CD14-positive monocyte (primary cell): ENCODE measurements at regions of chr15 and their contacts with region 1.

Region 1: GRCh38 chr15:57306161-57306943 is 70.0 kb upstream of the CGNL1 start:
- DNase-seq: peak; percentile 63 to 73 (median 69)
- H3K4me3 ChIP-seq: peak overlapping the region; percentile 38 to 83 (median 42)
- H3K4me3 Mint-ChIP-seq: peak overlapping the region; percentile 92 to 98
- H3K27ac ChIP-seq: peak overlapping the region in 1 of 2 donors; percentile 53
- H3K27ac Mint-ChIP-seq: peak overlapping the region in 4 of 7 donors; percentile 37 to 83 (median 77)
- H3K4me1 ChIP-seq: peaks cover 27 to 39% of the 10 kb centered on the region in 2 donors
- H3K4me1 Mint-ChIP-seq: peaks cover 44% of the 10 kb centered on the region
- H3K27me3 ChIP-seq: no peaks in the 10 kb centered on the region
- H3K27me3 Mint-ChIP-seq: peaks cover 0 to 3% (median under 1%) of the 10 kb centered on the region in 3 donors
- CTCF ChIP-seq: peak; percentile 93

Region 2: GRCh38 chr15:56821721-56822425 is 484.5 kb before region 1 on chr15:
- intact Hi-C with region 1: loop called in 1 of 2 experiments (anchors 5 kb)
- DNase-seq: peak; percentile 24 to 50 (median 40)
- H3K4me3 ChIP-seq: no peak overlapping the region
- H3K4me3 Mint-ChIP-seq: no peak overlapping the region
- H3K27ac ChIP-seq: no peak overlapping the region
- H3K27ac Mint-ChIP-seq: no peak overlapping the region
- H3K4me1 ChIP-seq: no peaks in the 10 kb centered on the region
- H3K4me1 Mint-ChIP-seq: peaks cover 8% of the 10 kb centered on the region
- H3K27me3 ChIP-seq: no peaks in the 10 kb centered on the region
- H3K27me3 Mint-ChIP-seq: no peaks in the 10 kb centered on the region
- CTCF ChIP-seq: peak; percentile 66

Region 3: DNA sequence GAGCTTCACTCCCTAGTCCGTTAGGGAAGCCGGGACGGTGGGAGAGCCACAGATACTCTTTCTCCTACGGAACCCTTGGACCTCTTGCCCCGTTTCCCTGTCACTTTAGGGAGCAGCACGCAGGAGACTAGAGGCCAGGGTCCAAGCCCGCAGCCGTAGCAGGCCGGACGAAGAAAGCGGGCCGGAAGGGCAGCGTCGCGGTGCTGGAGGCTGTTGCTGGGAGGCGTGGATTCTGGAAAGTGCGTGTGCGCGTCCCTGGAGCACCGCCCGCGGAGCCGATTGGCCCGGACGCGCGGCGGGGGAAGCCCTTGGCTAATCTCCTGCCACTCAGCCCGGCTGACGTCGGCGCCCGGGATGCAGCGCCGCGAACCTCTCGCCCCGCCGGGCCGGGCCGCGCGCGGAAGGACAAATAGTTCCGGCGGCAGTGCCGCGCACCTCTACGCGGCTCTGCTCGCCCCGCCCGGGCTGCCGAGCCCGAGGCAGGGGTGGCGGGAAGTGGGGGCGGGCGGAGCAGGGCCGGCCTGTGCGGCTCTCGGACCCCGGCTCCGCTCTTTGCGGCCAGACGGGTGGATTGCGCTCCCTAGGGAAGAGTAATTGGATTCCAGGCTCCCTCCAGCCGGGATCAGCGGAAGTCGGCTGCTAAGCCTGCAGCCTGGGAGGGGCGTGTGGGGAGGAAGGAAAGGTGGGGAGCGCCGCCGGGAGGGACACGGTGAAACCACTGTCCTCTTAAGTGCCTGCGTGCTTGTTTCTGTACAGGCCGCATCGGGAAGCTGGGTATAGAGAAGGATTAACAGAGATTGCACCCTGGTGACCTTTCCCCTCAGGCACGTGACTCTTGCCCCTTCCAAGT is 419.2 kb before region 1 on chr15:
- intact Hi-C with region 1: no loop called
- DNase-seq: peak; percentile 90 to 94 (median 91)
- H3K4me3 ChIP-seq: peak overlapping the region; percentile 66 to 80 (median 78)
- H3K4me3 Mint-ChIP-seq: peak overlapping the region; percentile 85 to 89
- H3K27ac ChIP-seq: peak overlapping the region; percentile 89 to 93
- H3K27ac Mint-ChIP-seq: peak overlapping the region; percentile 92 to 97 (median 96)
- H3K4me1 ChIP-seq: peaks cover 22 to 30% of the 10 kb centered on the region in 2 donors
- H3K4me1 Mint-ChIP-seq: peaks cover 28% of the 10 kb centered on the region
- H3K27me3 ChIP-seq: no peaks in the 10 kb centered on the region
- H3K27me3 Mint-ChIP-seq: no peaks in the 10 kb centered on the region
- CTCF ChIP-seq: no peak

Region 4: GRCh38 chr15:57060799-57061198 is 245.6 kb before region 1 on chr15:
- intact Hi-C with region 1: no loop called
- DNase-seq: no peak
- H3K4me3 ChIP-seq: no peak overlapping the region
- H3K4me3 Mint-ChIP-seq: no peak overlapping the region
- H3K27ac ChIP-seq: no peak overlapping the region
- H3K27ac Mint-ChIP-seq: no peak overlapping the region
- H3K4me1 ChIP-seq: no peaks in the 10 kb centered on the region
- H3K4me1 Mint-ChIP-seq: peaks cover 19% of the 10 kb centered on the region
- H3K27me3 ChIP-seq: no peaks in the 10 kb centered on the region
- H3K27me3 Mint-ChIP-seq: peaks cover 0 to 2% (median 0%) of the 10 kb centered on the region in 3 donors
- CTCF ChIP-seq: no peak

Region 5: DNA sequence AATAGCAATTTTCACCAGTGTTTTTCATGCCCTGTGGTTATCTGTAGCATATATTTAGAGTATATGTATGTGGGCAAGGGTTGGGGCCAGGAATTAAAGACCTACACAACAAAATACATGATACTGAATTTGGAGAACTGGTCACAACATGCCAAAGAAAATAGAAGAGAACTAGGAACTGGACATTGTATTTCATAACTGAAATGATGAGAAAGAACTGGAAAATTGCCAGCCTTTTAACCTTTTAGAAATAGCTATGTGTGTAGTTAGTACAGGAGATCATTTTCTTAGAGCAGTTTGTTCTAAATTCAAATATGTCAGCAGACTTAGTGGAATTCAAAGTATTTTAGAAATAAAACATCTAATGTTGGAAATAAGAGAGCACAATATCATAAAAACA is 157.2 kb before region 1 on chr15:
- intact Hi-C with region 1: loop called (anchors 2 kb)
- DNase-seq: peak in 1 of 3 donors; percentile 33
- H3K4me3 ChIP-seq: no peak overlapping the region
- H3K4me3 Mint-ChIP-seq: no peak overlapping the region
- H3K27ac ChIP-seq: peak overlapping the region in 1 of 2 donors; percentile 11
- H3K27ac Mint-ChIP-seq: no peak overlapping the region
- H3K4me1 ChIP-seq: peaks cover 22 to 45% of the 10 kb centered on the region in 2 donors
- H3K4me1 Mint-ChIP-seq: peaks cover 52% of the 10 kb centered on the region
- H3K27me3 ChIP-seq: no peaks in the 10 kb centered on the region
- H3K27me3 Mint-ChIP-seq: no peaks in the 10 kb centered on the region
- CTCF ChIP-seq: no peak

Region 6: DNA sequence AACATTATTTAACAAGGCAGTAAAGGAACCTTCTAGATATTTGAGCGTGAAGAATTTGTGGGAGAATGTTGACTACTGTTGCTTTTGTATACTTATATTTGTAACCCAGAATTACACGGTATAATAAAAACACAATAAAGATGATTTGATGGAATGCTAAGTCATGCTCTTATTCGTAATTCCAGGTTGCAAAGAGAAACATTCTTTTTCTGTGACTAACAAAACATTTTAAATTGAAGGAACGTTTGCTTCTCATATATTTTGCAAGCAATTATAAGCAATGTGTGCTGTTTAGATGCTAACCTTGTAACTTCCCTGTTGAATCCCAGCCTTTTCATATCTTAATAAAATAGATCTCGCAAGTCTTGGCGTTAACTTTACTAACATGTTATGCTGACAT is 54.4 kb before region 1 on chr15:
- intact Hi-C with region 1: no loop called
- DNase-seq: no peak
- H3K4me3 ChIP-seq: no peak overlapping the region
- H3K4me3 Mint-ChIP-seq: no peak overlapping the region
- H3K27ac ChIP-seq: no peak overlapping the region
- H3K27ac Mint-ChIP-seq: no peak overlapping the region
- H3K4me1 ChIP-seq: no peaks in the 10 kb centered on the region
- H3K4me1 Mint-ChIP-seq: peaks cover under 1% of the 10 kb centered on the region
- H3K27me3 ChIP-seq: no peaks in the 10 kb centered on the region
- H3K27me3 Mint-ChIP-seq: no peaks in the 10 kb centered on the region
- CTCF ChIP-seq: no peak